Common myeloid progenitor, CD34-positive (primary cell): ENCODE measurements at regions of chr2 and their contacts with region 1.

Region 1: DNA sequence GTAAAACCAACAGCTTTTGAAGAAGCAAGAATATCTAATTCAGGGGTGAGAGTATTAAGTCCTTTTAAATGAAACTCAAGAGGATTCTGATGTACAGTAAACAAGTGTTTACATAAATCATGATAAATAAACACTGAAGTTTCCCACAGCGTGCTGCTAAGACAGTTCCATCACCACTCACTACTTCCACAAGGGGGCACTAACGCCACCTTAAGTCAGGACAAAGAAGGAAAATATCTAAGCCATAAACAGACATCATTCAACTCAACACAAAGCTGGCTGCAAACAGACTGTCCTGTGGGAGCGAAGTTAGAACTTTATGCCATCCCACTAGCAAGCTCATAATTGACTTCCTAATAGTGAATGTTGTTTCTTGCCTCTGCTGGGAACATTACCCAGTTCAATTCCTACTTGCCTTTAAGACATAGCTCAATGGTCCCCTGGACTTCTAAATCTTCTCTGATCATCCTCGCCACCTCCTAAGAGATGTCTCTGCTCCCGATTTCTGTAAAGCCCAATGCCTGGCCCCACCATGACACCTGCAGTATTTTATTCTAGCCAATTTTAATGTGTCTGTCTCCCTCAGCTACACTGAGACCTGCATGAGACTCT is 36.5 kb downstream of the MRPL44 start:
- DNase-seq: peak; percentile 81 to 89 (median 82)
- H3K4me3 ChIP-seq: no peak overlapping the region
- H3K27ac ChIP-seq: no peak overlapping the region
- H3K4me1 ChIP-seq: peaks cover 0 to 2% (median 0%) of the 10 kb centered on the region in 4 experiments
- H3K27me3 ChIP-seq: no peaks in the 10 kb centered on the region

Region 2: DNA sequence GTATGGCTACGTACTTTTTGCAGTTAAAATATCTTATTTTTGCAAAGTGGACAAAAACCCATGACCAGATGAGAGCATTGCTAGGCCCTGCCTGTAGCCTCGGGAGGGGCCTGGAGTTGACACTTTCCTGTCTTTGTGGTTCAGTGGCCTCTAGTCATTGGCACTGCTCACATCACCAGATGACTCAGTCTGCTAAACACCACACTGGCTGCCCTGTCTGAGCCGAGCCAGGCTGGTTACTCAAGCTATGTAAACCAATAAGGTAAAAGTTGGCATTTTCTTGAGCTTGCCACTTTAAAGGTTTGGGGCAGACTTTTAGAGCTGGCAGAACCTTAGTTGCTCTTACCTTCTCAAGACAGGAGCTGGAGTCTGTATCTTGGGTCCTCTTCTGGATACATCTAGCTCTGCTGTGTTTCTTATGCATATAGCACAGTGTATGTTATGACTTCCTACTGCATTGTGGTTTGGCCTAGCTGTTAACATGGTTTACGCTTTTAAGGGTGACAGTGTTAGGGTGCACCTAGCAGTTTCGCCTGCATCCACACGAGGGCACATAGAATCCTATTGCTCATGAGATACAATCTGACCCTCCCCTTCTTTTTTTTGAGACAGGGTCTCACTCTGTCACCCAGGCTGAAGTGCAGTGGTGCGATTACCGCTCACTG is 232.8 kb before region 1 on chr2:
- CTCF ChIA-PET with region 1: no interaction called
- POLR2A ChIA-PET with region 1: no interaction called
- DNase-seq: peak in 2 of 3 donors; percentile 6 to 12
- H3K4me3 ChIP-seq: no peak overlapping the region
- H3K27ac ChIP-seq: no peak overlapping the region
- H3K4me1 ChIP-seq: peaks cover 0 to 4% (median 0%) of the 10 kb centered on the region in 4 experiments
- H3K27me3 ChIP-seq: no peaks in the 10 kb centered on the region

Region 3: GRCh38 chr2:223970343-223971128 is 23.2 kb before region 1 on chr2:
- CTCF ChIA-PET with region 1: interaction called, 41 read pairs
- POLR2A ChIA-PET with region 1: no interaction called
- DNase-seq: peak; percentile 64 to 84 (median 74)
- H3K4me3 ChIP-seq: no peak overlapping the region
- H3K27ac ChIP-seq: no peak overlapping the region
- H3K4me1 ChIP-seq: no peaks in the 10 kb centered on the region
- H3K27me3 ChIP-seq: no peaks in the 10 kb centered on the region

Region 4: GRCh38 chr2:224008702-224009261 is 15.1 kb after region 1 on chr2:
- CTCF ChIA-PET with region 1: interaction called, 29 read pairs
- POLR2A ChIA-PET with region 1: no interaction called
- DNase-seq: no peak
- H3K4me3 ChIP-seq: no peak overlapping the region
- H3K27ac ChIP-seq: no peak overlapping the region
- H3K4me1 ChIP-seq: peaks cover 0 to 11% (median 1%) of the 10 kb centered on the region in 4 experiments
- H3K27me3 ChIP-seq: no peaks in the 10 kb centered on the region

Region 5: GRCh38 chr2:224031358-224031970 is 37.7 kb after region 1 on chr2:
- CTCF ChIA-PET with region 1: interaction called, 25 read pairs
- POLR2A ChIA-PET with region 1: no interaction called
- DNase-seq: peak in 2 of 3 donors; percentile 20 to 39
- H3K4me3 ChIP-seq: no peak overlapping the region
- H3K27ac ChIP-seq: no peak overlapping the region
- H3K4me1 ChIP-seq: peaks cover 9 to 51% (median 21%) of the 10 kb centered on the region in 4 experiments
- H3K27me3 ChIP-seq: no peaks in the 10 kb centered on the region

Region 6: DNA sequence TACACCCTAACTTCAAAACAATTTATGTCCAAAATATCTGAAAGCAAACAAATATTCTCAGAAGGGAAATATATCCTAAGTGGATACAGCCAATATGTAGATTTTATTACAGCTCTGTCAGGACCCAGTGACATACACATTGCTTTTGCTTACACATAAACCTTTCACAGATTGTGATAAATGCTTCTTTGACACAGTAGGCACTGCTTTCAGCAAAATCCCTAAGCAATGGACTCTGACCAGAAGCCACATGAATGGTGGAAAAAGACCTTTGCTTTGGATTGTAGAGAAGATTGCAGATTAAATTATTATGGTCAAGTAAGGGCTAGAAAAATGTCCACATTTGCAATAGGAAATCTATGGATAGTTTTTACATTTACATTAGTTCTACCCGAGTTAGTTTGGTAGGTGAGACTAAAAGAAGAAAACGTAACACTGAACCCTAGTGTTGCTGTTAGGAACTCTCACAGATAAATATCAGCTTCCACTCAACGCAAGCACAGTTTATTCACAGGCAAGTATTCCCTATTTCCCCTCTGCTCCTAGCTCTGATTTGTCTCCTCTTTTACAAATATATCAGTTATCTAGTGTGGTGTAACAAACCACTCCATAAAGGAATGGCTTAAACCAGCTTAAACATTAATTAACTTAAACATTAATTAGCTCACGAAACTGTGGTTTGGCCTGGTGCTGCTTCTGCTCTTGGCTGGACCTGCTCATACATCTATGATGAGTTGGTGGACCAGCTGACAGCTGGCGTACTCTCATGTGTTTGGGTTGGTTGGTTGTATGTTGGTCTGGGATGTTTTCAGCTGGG is 69.0 kb after region 1 on chr2:
- CTCF ChIA-PET with region 1: interaction called, 101 read pairs
- POLR2A ChIA-PET with region 1: interaction called, 3 read pairs
- DNase-seq: peak; percentile 26 to 35 (median 28)
- H3K4me3 ChIP-seq: no peak overlapping the region
- H3K27ac ChIP-seq: no peak overlapping the region
- H3K4me1 ChIP-seq: no peaks in the 10 kb centered on the region
- H3K27me3 ChIP-seq: no peaks in the 10 kb centered on the region